ENCODE measurements at regions of chr12 and their contacts with region 1.

Region 1: GRCh38 chr12:63420206-63420644 is 248.1 kb downstream of the DPY19L2 start:
- DNase-seq: no peak
- ATAC-seq: peak; percentile 56

Region 2: GRCh38 chr12:63668028-63668799 is 248.0 kb after region 1 on chr12 and contains the start of gene DPY19L2:
- intact Hi-C with region 1: loop called (anchors 5 kb)
- DNase-seq: peak; percentile 88
- ATAC-seq: peak; percentile 98
- total RNA-seq, gene DPY19L2: 41.0 TPM

Measured in Right ventricle myocardium inferior (tissue), 1 donor.